ENCODE measurements at regions of chr15 and their contacts with region 1.

Region 1: GRCh38 chr15:101008158-101009139 is 89.3 kb downstream of the LRRK1 start:
- DNase-seq: peak; percentile 62 to 98 (median 85)
- ATAC-seq: peak; percentile 96
- H3K4me3 ChIP-seq: peak overlapping the region; percentile 42 to 43
- H3K27ac ChIP-seq: peak overlapping the region in 1 of 2 donors; percentile 28
- H3K4me1 ChIP-seq: peaks cover 0 to 23% of the 10 kb centered on the region in 2 donors
- H3K27me3 ChIP-seq: no peaks in the 10 kb centered on the region
- CTCF ChIP-seq: peak; percentile 93 to 94

Region 2: GRCh38 chr15:100918034-100918689 is 90.3 kb before region 1 on chr15:
- intact Hi-C with region 1: loop called in 1 of 2 experiments (anchors 5 kb)
- DNase-seq: peak; percentile 53 to 98 (median 78)
- ATAC-seq: peak; percentile 94
- H3K4me3 ChIP-seq: peak overlapping the region; percentile 57 to 67
- H3K27ac ChIP-seq: peak overlapping the region; percentile 59 to 62
- H3K4me1 ChIP-seq: peaks cover 0 to 54% of the 10 kb centered on the region in 2 donors
- H3K27me3 ChIP-seq: peaks cover 0 to 23% of the 10 kb centered on the region in 2 donors
- CTCF ChIP-seq: peak; percentile 93 to 96